ENCODE measurements at regions of chr15 and their contacts with region 1.

Region 1: DNA sequence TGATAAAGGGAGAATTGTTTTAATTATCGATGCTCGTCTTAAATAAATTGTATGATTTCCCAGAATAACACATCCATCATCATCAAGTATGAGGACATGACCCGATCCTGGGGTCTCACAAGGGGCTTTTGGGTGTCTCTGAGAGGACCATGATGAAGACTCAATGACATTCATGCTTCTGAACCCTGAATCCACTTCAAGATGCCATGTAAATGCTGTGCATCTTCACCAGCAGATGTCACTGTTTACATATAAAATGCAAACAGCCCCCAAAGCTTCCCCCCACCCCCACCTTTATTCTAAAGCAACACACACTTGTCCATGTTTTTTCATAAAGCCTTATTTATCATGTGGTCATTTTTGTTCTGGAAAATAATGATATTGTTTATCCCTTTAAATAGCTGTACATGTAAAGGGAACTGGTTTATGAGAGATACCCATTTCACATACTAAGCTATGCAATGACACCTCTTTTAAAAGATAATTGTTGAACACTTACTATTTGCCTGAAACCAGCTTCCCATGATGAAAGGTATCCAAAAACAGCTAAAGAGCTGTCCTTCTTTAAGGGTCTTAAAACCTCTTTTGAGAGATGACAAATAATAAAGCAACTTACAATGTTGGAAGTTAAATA is 69.7 kb upstream of the UBE3A start:
- DNase-seq: no peak
- ATAC-seq: peak in 2 of 4 donors; percentile 39 to 52
- H3K4me3 ChIP-seq: no peak overlapping the region
- H3K27ac ChIP-seq: no peak overlapping the region
- H3K4me1 ChIP-seq: peaks cover 0 to 3% (median 0%) of the 10 kb centered on the region in 12 donors
- H3K27me3 ChIP-seq: no peaks in the 10 kb centered on the region
- CTCF ChIP-seq: peak; percentile 46 to 83 (median 72)
- POLR2A ChIP-seq: no peak

Region 2: GRCh38 chr15:24761704-24762302 is 746.7 kb before region 1 on chr15:
- intact Hi-C with region 1: loop called in 4 of 10 experiments (anchors 5 to 10 kb)
- DNase-seq: no peak
- ATAC-seq: no peak
- H3K4me3 ChIP-seq: no peak overlapping the region
- H3K27ac ChIP-seq: no peak overlapping the region
- H3K4me1 ChIP-seq: no peaks in the 10 kb centered on the region
- H3K27me3 ChIP-seq: peaks cover 0 to 6% (median 0%) of the 10 kb centered on the region in 9 donors
- CTCF ChIP-seq: peak in 11 of 12 donors; percentile 21 to 61 (median 41)
- POLR2A ChIP-seq: no peak

Region 3: GRCh38 chr15:25543196-25543595 is 34.7 kb after region 1 on chr15:
- intact Hi-C with region 1: no loop called
- DNase-seq: peak in 4 of 5 donors; percentile 54 to 60 (median 56)
- ATAC-seq: peak; percentile 32 to 82 (median 70)
- H3K4me3 ChIP-seq: no peak overlapping the region
- H3K27ac ChIP-seq: peak overlapping the region in 5 of 12 donors; percentile 10 to 35 (median 23)
- H3K4me1 ChIP-seq: peaks cover 0 to 24% (median 2%) of the 10 kb centered on the region in 12 donors
- H3K27me3 ChIP-seq: no peaks in the 10 kb centered on the region
- CTCF ChIP-seq: no peak
- POLR2A ChIP-seq: no peak

Region 4: DNA sequence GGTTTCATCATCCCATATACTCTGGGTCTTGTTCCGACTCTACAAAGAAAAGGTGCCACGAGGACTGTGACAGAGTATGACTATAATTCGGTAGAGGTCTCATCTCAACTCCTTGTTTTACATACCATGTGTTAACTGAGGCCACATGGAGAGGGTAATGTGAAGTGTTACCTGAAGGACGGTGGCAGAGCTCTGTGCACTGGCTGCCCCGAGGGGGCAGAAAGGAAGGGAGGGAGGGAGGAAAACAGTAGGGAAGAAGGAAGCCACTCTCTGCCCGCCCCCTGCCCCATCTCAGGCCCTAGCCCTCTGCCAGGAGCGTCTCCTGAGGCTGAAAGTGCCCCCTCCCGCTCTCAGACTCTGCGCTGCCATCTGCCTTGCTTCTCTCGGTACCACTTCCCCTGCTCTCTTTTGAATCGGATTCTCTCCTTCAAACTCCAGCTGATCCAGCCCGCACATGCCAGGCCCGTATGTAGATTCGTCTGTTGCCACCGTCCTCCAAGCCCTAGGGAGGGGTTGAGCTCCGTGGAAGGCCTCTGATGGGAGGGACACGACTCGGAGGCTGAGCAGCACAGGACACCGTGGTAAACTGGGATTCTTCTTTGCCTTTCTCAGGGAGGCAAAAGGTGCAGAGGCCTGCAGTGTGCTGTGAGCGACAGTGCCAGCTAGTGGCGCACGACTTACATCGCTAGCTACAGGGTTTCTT is 425.1 kb after region 1 on chr15:
- intact Hi-C with region 1: loop called in 8 of 10 experiments (anchors 2 to 10 kb)
- DNase-seq: peak; percentile 44 to 80 (median 72)
- ATAC-seq: peak; percentile 88 to 98 (median 92)
- H3K4me3 ChIP-seq: peak overlapping the region in 8 of 12 donors; percentile 10 to 43 (median 28)
- H3K27ac ChIP-seq: no peak overlapping the region
- H3K4me1 ChIP-seq: peaks cover 0 to 7% (median 1%) of the 10 kb centered on the region in 12 donors
- H3K27me3 ChIP-seq: no peaks in the 10 kb centered on the region
- CTCF ChIP-seq: peak; percentile 44 to 75 (median 63)
- POLR2A ChIP-seq: no peak

Region 5: DNA sequence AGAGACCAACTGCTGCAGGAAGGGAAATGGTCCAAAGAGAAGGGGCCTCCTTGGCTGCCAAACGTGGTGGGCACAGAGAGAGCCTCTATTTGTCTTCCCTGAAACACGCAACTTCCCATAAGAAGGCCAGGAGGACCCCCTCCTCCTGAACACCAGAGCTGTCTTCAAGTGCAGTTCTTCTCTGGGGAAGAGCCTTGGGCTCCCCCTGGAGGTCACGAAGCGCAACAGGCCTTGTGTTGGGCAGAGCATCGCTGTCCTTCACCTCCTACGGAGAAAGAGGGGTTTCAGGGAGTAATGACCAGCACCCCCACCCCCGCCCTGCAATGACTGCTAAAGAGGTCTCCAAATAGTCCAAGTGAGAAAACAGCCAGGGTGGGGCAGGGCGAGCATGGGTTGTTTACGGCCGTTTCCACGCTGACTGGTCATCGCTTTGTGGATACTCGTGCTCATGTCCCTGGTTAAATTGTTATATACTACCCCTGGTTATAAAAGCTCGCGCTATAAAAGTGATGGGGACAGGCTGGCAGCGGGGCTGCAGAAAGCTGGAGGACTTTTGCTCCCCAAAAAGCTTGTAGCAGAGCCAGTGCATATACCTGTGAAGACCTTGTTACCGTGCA is 752.1 kb after region 1 on chr15:
- intact Hi-C with region 1: loop called in 6 of 10 experiments (anchors 5 to 10 kb)
- DNase-seq: peak in 1 of 5 donors; percentile 31
- ATAC-seq: no peak
- H3K4me3 ChIP-seq: no peak overlapping the region
- H3K27ac ChIP-seq: peak overlapping the region in 6 of 12 donors; percentile 43 to 77 (median 61)
- H3K4me1 ChIP-seq: peaks cover 0 to 17% (median 0%) of the 10 kb centered on the region in 12 donors
- H3K27me3 ChIP-seq: no peaks in the 10 kb centered on the region
- CTCF ChIP-seq: peak; percentile 44 to 69 (median 56)
- POLR2A ChIP-seq: no peak

Measured in heart left ventricle (tissue), 16 donors.